ENCODE measurements at regions of chr6 and their contacts with region 1.

Region 1: GRCh38 chr6:42928986-42929820 is at the start of gene CNPY3:
- DNase-seq: peak; percentile 98
- H3K4me3 ChIP-seq: peak within 1 kb of the TSS; percentile 54 to 94 (median 85)
- H3K27ac ChIP-seq: peak within 1 kb of the TSS; percentile 95
- H3K4me1 ChIP-seq: peaks cover 17% of the 10 kb centered on the region
- H3K27me3 ChIP-seq: peaks cover 0 to 3% of the 10 kb centered on the region in 2 experiments
- CTCF ChIP-seq: peak in 1 of 2 donors; percentile 7
- POLR2A ChIP-seq: no peak
- total RNA-seq, gene CNPY3: 43.3 and 53.1 TPM in 2 replicates

Region 2: GRCh38 chr6:42963855-42964605 is 34.8 kb after region 1 on chr6:
- CTCF ChIA-PET with region 1: no interaction called
- POLR2A ChIA-PET with region 1: interaction called, 4 read pairs
- dilution Hi-C with region 1: no loop called
- intact Hi-C with region 1: loop called (anchors 2 kb)
- DNase-seq: peak; percentile 50
- H3K4me3 ChIP-seq: no peak overlapping the region
- H3K27ac ChIP-seq: no peak overlapping the region
- H3K4me1 ChIP-seq: peaks cover 10% of the 10 kb centered on the region
- H3K27me3 ChIP-seq: no peaks in the 10 kb centered on the region
- CTCF ChIP-seq: peak; percentile 8 to 31
- POLR2A ChIP-seq: no peak

Region 3: GRCh38 chr6:42978839-42979522 is 49.8 kb after region 1 on chr6 and contains the start of gene PEX6:
- CTCF ChIA-PET with region 1: interaction called, 6 read pairs
- POLR2A ChIA-PET with region 1: no interaction called
- dilution Hi-C with region 1: no loop called
- intact Hi-C with region 1: loop called (anchors 1 kb)
- DNase-seq: peak; percentile 83
- H3K4me3 ChIP-seq: peak within 1 kb of the TSS; percentile 62 to 74 (median 72)
- H3K27ac ChIP-seq: peak within 1 kb of the TSS; percentile 58
- H3K4me1 ChIP-seq: peaks cover 28% of the 10 kb centered on the region
- H3K27me3 ChIP-seq: no peaks in the 10 kb centered on the region
- CTCF ChIP-seq: no peak
- POLR2A ChIP-seq: peak; percentile 83
- total RNA-seq, gene PEX6: 9.9 and 18.1 TPM in 2 replicates

Region 4: GRCh38 chr6:43059168-43060033 is 130.2 kb after region 1 on chr6 and contains the starts of genes KLC4 and MRPL2:
- CTCF ChIA-PET with region 1: no interaction called
- POLR2A ChIA-PET with region 1: no interaction called
- dilution Hi-C with region 1: no loop called
- intact Hi-C with region 1: loop called (anchors 1 kb)
- DNase-seq: peak; percentile 100
- H3K4me3 ChIP-seq: peak within 1 kb of the TSS; percentile 80 to 96 (median 94)
- H3K27ac ChIP-seq: peak within 1 kb of the TSS; percentile 91
- H3K4me1 ChIP-seq: peaks cover 15% of the 10 kb centered on the region
- H3K27me3 ChIP-seq: no peaks in the 10 kb centered on the region
- CTCF ChIP-seq: no peak
- POLR2A ChIP-seq: peak; percentile 92
- total RNA-seq, gene KLC4: 26.8 and 26.9 TPM in 2 replicates
- total RNA-seq, gene MRPL2: 59.7 and 63.6 TPM in 2 replicates